Endothelial cell of umbilical vein (primary cell): ENCODE measurements at regions of chr1 and their contacts with region 1.

Region 1: GRCh38 chr1:35726450-35727433 is 8.1 kb upstream of the C1orf216 start:
- DNase-seq: peak; percentile 66
- H3K4me3 ChIP-seq: no peak overlapping the region
- H3K27ac ChIP-seq: no peak overlapping the region
- H3K4me1 ChIP-seq: no peaks in the 10 kb centered on the region
- H3K27me3 ChIP-seq: no peaks in the 10 kb centered on the region
- CTCF ChIP-seq: peak; percentile 76 to 90
- POLR2A ChIP-seq: no peak

Region 2: DNA sequence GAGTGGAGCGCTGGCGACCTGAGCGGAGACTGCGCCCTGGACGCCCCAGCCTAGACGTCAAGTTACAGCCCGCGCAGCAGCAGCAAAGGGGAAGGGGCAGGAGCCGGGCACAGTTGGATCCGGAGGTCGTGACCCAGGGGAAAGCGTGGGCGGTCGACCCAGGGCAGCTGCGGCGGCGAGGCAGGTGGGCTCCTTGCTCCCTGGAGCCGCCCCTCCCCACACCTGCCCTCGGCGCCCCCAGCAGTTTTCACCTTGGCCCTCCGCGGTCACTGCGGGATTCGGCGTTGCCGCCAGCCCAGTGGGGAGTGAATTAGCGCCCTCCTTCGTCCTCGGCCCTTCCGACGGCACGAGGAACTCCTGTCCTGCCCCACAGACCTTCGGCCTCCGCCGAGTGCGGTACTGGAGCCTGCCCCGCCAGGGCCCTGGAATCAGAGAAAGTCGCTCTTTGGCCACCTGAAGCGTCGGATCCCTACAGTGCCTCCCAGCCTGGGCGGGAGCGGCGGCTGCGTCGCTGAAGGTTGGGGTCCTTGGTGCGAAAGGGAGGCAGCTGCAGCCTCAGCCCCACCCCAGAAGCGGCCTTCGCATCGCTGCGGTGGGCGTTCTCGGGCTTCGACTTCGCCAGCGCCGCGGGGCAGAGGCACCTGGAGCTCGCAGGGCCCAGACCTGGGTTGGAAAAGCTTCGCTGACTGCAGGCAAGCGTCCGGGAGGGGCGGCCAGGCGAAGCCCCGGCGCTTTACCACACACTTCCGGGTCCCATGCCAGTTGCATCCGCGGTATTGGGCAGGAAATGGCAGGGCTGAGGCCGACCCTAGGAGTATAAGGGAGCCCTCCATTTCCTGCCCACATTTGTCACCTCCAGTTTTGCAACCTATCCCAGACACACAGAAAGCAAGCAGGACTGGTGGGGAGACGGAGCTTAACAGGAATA is 149.4 kb before region 1 on chr1:
- CTCF ChIA-PET with region 1: interaction called, 67 read pairs
- POLR2A ChIA-PET with region 1: no interaction called
- dilution Hi-C with region 1: no loop called
- intact Hi-C with region 1: no loop called
- DNase-seq: peak; percentile 37
- H3K4me3 ChIP-seq: peak overlapping the region in 1 of 3 experiments; percentile 9
- H3K27ac ChIP-seq: no peak overlapping the region
- H3K4me1 ChIP-seq: peaks cover 9% of the 10 kb centered on the region
- H3K27me3 ChIP-seq: peaks cover 30 to 52% of the 10 kb centered on the region in 2 experiments
- CTCF ChIP-seq: no peak
- POLR2A ChIP-seq: no peak

Region 3: GRCh38 chr1:35641233-35641866 is 85.4 kb before region 1 on chr1 and contains the start of gene PSMB2:
- CTCF ChIA-PET with region 1: interaction called, 7 read pairs
- POLR2A ChIA-PET with region 1: no interaction called
- dilution Hi-C with region 1: loop called (anchors 25 kb)
- intact Hi-C with region 1: no loop called
- DNase-seq: peak; percentile 96
- H3K4me3 ChIP-seq: peak within 1 kb of the TSS; percentile 64 to 100 (median 80)
- H3K27ac ChIP-seq: peak within 1 kb of the TSS; percentile 81
- H3K4me1 ChIP-seq: peaks cover 24% of the 10 kb centered on the region
- H3K27me3 ChIP-seq: peaks cover 13 to 20% of the 10 kb centered on the region in 2 experiments
- CTCF ChIP-seq: no peak
- POLR2A ChIP-seq: peak; percentile 94
- total RNA-seq, gene PSMB2: 93.6 and 101 TPM in 2 replicates

Region 4: GRCh38 chr1:35715568-35716002 is 11.2 kb before region 1 on chr1:
- CTCF ChIA-PET with region 1: interaction called, 97 read pairs
- POLR2A ChIA-PET with region 1: no interaction called
- dilution Hi-C with region 1: no loop called
- intact Hi-C with region 1: no loop called
- DNase-seq: peak; percentile 65
- H3K4me3 ChIP-seq: no peak overlapping the region
- H3K27ac ChIP-seq: no peak overlapping the region
- H3K4me1 ChIP-seq: peaks cover 13% of the 10 kb centered on the region
- H3K27me3 ChIP-seq: no peaks in the 10 kb centered on the region
- CTCF ChIP-seq: peak; percentile 85 to 89
- POLR2A ChIP-seq: no peak

Region 5: DNA sequence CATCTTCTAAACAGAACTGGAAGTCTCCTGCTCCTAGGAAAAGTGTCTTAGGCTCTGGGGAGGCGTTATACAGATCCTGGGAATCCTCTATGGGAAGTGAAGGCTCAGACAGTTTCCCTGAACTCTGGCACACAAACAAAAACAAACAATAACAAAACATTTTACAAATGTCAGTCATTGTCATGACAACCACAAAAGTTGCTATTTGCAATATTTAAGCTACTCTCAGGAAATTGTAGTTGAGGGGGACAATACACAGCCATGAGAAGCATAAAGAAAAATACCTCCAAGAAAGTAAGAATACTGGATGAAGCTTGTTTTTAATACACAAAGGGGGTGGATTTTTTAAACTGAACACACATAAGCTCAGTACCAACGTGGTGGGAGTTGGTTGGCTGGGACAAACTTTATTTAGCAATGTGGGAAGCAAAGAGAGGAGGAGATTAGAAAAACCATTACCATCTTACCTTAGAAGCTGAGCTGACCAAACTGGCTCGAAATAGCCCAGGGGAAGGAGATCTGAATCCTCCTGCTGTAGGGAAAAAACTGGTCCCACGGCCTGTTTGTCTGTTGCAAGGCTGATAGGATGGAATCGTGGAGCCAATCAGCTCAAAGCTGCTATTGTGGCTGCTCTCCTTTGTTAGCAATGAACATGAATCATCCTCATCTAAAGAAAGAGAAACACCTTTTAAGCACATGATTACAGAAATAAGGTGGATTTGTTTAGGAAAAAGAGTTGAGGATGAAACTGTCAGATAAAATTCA is 21.4 kb after region 1 on chr1:
- CTCF ChIA-PET with region 1: interaction called, 16 read pairs
- POLR2A ChIA-PET with region 1: no interaction called
- dilution Hi-C with region 1: no loop called
- intact Hi-C with region 1: no loop called
- DNase-seq: no peak
- H3K4me3 ChIP-seq: no peak overlapping the region
- H3K27ac ChIP-seq: no peak overlapping the region
- H3K4me1 ChIP-seq: no peaks in the 10 kb centered on the region
- H3K27me3 ChIP-seq: no peaks in the 10 kb centered on the region
- CTCF ChIP-seq: no peak
- POLR2A ChIP-seq: no peak

Region 6: GRCh38 chr1:35777109-35777508 is 50.4 kb after region 1 on chr1:
- CTCF ChIA-PET with region 1: interaction called, 18 read pairs
- POLR2A ChIA-PET with region 1: no interaction called
- dilution Hi-C with region 1: no loop called
- intact Hi-C with region 1: loop called (anchors 1 kb)
- DNase-seq: no peak
- H3K4me3 ChIP-seq: no peak overlapping the region
- H3K27ac ChIP-seq: no peak overlapping the region
- H3K4me1 ChIP-seq: no peaks in the 10 kb centered on the region
- H3K27me3 ChIP-seq: no peaks in the 10 kb centered on the region
- CTCF ChIP-seq: no peak
- POLR2A ChIP-seq: no peak

Region 7: DNA sequence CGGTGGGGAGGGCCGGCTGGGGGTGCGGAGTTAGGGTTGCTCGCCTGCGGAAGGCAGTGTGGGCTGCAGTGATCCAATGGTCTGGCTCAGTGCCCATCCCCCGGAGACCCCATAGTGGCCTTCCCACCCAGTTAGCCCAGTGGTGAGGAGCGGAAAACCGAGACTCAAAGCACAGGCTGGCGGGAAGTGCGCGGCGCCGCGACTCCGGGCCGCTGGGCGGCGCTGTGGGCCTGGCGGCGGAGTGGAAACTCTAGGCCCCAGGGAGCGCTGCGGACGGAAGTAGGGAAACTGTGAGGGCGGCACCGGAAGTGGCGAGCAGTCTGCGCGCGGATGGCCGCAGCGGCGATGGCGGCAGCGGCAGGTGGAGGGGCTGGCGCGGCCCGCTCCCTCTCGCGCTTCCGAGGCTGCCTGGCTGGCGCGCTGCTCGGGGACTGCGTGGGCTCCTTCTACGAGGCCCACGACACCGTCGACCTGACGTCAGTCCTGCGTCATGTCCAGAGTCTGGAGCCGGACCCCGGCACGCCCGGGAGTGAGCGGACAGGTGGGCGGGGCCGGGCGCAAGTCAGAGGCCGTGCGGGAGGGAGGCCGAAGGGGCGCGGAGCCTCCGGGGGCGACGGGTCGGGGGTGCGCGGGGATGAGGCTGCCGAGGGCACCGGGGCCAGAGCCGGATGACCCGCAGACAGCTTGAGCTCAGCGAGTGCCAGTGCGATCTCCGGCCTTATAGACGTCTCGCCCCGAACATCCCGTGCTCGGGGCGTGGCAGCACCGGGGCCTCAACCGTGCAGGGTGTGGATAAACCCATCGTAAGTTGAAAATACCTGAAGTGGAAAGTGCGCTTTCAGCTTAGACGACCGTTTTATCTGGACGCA is 362.1 kb after region 1 on chr1 and contains the start of gene ADPRS:
- CTCF ChIA-PET with region 1: no interaction called
- POLR2A ChIA-PET with region 1: no interaction called
- dilution Hi-C with region 1: no loop called
- intact Hi-C with region 1: no loop called
- DNase-seq: peak; percentile 91
- H3K4me3 ChIP-seq: peak within 1 kb of the TSS; percentile 68 to 96 (median 83)
- H3K27ac ChIP-seq: peak within 1 kb of the TSS; percentile 35
- H3K4me1 ChIP-seq: peaks cover 8% of the 10 kb centered on the region
- H3K27me3 ChIP-seq: no peaks in the 10 kb centered on the region
- CTCF ChIP-seq: peak; percentile 98 to 100
- POLR2A ChIP-seq: peak; percentile 95
- total RNA-seq, gene ADPRS: 32.9 and 33.9 TPM in 2 replicates